ENCODE measurements at regions of chr20 and their contacts with region 1.

Region 1: GRCh38 chr20:2692036-2692885 is at the start of gene EBF4:
- DNase-seq: peak in 1 of 2 donors; percentile 75
- H3K4me3 ChIP-seq: peak within 1 kb of the TSS; percentile 60
- H3K27ac ChIP-seq: peak within 1 kb of the TSS; percentile 75 to 85
- H3K4me1 ChIP-seq: peaks cover 0 to 16% (median 14%) of the 10 kb centered on the region in 4 donors
- H3K27me3 ChIP-seq: peaks cover 0 to 16% of the 10 kb centered on the region in 2 donors
- CTCF ChIP-seq: no peak

Region 2: GRCh38 chr20:2651772-2652723 is 40.2 kb before region 1 on chr20 and contains the start of gene NOP56:
- intact Hi-C with region 1: loop called (anchors 2 kb)
- DNase-seq: peak; percentile 85 to 94
- H3K4me3 ChIP-seq: peak within 1 kb of the TSS; percentile 66 to 84
- H3K27ac ChIP-seq: peak within 1 kb of the TSS; percentile 82 to 89
- H3K4me1 ChIP-seq: peaks cover 0 to 21% (median 13%) of the 10 kb centered on the region in 4 donors
- H3K27me3 ChIP-seq: no peaks in the 10 kb centered on the region
- CTCF ChIP-seq: no peak

Region 3: GRCh38 chr20:2680046-2680445 is 12.2 kb before region 1 on chr20:
- intact Hi-C with region 1: no loop called
- DNase-seq: no peak
- H3K4me3 ChIP-seq: no peak overlapping the region
- H3K27ac ChIP-seq: no peak overlapping the region
- H3K4me1 ChIP-seq: no peaks in the 10 kb centered on the region
- H3K27me3 ChIP-seq: no peaks in the 10 kb centered on the region
- CTCF ChIP-seq: no peak

Region 4: GRCh38 chr20:2840138-2840966 is 148.1 kb after region 1 on chr20 and contains the starts of genes PCED1A and VPS16:
- intact Hi-C with region 1: loop called (anchors 10 kb)
- DNase-seq: peak; percentile 84 to 92
- H3K4me3 ChIP-seq: peak within 1 kb of the TSS; percentile 89 to 95
- H3K27ac ChIP-seq: peak within 1 kb of the TSS; percentile 92 to 95
- H3K4me1 ChIP-seq: peaks cover 0 to 30% (median 17%) of the 10 kb centered on the region in 4 donors
- H3K27me3 ChIP-seq: no peaks in the 10 kb centered on the region
- CTCF ChIP-seq: no peak

Region 5: DNA sequence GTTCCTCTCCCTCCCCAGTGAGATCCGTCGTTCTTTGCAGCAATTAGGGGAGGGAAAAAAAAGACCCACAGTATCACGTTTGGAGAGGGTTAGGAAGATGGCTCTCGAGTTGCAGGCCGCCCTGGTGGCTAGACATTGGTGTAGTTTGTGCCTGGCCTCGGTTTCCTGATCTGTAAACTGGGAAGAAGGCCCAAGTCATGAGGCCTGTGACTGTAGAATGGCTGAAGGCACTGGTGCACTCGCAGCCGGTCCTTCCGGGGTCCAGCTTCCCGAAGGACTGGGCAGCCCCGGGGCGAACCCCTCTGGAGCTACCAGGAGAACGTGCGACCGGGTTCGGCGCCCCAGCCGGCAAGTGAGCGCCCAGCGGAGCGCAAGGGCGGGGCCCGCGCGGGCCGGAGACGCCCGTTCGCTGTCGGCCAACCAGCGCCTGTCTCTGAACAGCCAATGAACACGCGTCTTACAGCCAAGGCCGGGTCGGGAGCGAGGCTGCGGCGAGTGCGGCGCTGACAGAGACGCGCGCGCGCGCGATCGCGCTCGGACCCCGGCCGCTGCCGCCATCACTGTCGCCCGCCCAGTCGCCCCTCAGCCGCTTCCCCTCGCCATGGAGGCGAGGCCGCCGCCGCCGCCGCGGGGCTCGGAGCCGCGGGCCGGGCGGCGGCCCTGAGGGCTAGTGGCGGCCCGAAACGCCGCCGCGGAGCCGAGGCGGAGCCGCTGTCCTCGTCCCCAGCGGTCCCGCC is 180.9 kb after region 1 on chr20 and contains the start of gene PTPRA:
- intact Hi-C with region 1: loop called (anchors 10 kb)
- DNase-seq: peak; percentile 90 to 94
- H3K4me3 ChIP-seq: peak within 1 kb of the TSS; percentile 74 to 94
- H3K27ac ChIP-seq: peak within 1 kb of the TSS; percentile 71 to 81
- H3K4me1 ChIP-seq: peaks cover 0 to 48% (median 41%) of the 10 kb centered on the region in 4 donors
- H3K27me3 ChIP-seq: peaks cover 0 to 12% of the 10 kb centered on the region in 2 donors
- CTCF ChIP-seq: no peak